ENCODE measurements at regions of chr1 and their contacts with region 1.

Region 1: DNA sequence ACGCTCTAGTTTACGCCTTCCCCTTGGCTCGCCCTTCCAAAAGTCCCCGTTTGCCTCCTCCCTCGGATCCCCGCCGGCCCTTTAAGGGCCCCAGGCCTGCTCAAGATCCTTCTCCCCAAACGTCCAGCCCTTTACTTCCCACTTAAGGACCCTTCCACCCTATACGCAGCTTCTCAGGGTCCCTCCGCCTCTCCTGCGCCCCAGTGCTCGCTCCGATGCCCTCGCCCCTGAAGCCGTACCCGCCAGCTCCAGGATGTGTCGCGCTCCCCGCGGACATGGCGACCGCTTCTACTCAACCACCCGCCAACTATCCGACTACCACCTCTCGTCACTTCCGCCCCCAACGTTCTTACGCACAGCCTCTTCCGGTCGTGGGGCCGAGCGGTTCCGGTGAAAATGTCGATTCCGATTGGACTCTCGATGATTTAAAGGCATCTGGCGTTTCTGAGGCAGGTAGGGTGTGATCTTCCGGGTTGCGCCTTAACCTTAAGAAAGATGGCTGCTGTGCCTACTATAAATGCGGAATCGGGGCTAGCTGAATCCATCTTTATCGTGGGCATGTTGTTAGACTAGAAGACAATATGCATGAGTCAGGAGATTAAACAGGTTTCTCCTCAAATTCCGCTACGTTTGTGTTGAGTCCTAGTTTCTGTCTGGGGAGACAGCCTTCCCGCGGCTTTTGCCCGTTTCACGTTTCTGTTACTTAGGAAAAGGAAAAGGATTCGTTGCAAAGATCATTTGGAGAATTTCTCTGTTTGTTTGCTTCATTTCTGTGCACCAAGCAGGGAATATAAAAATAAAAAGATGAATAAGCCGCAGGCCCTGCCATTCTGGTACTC is at the start of gene KHDC4:
- DNase-seq: peak; percentile 95
- CTCF ChIP-seq: no peak

Region 2: GRCh38 chr1:155527677-155528076 is 406.6 kb before region 1 on chr1:
- CTCF ChIA-PET with region 1: no interaction called
- POLR2A ChIA-PET with region 1: interaction called, 14 read pairs
- DNase-seq: no peak
- CTCF ChIP-seq: no peak

Region 3: GRCh38 chr1:155688324-155689080 is 245.8 kb before region 1 on chr1 and contains the start of gene YY1AP1:
- CTCF ChIA-PET with region 1: no interaction called
- POLR2A ChIA-PET with region 1: no interaction called
- DNase-seq: peak; percentile 95
- CTCF ChIP-seq: no peak

Region 4: GRCh38 chr1:155847823-155848529 is 86.3 kb before region 1 on chr1:
- CTCF ChIA-PET with region 1: no interaction called
- POLR2A ChIA-PET with region 1: no interaction called
- DNase-seq: no peak
- CTCF ChIP-seq: no peak

Region 5: GRCh38 chr1:155946633-155947219 is 12.4 kb after region 1 on chr1:
- CTCF ChIA-PET with region 1: interaction called, 8 read pairs
- POLR2A ChIA-PET with region 1: interaction called, 11 read pairs
- DNase-seq: no peak
- CTCF ChIP-seq: no peak

Region 6: GRCh38 chr1:155978325-155978972 is 44.1 kb after region 1 on chr1 and contains the start of gene ARHGEF2:
- CTCF ChIA-PET with region 1: interaction called, 51 read pairs
- POLR2A ChIA-PET with region 1: interaction called, 3 read pairs
- DNase-seq: peak; percentile 90
- CTCF ChIP-seq: peak; percentile 33

Region 7: DNA sequence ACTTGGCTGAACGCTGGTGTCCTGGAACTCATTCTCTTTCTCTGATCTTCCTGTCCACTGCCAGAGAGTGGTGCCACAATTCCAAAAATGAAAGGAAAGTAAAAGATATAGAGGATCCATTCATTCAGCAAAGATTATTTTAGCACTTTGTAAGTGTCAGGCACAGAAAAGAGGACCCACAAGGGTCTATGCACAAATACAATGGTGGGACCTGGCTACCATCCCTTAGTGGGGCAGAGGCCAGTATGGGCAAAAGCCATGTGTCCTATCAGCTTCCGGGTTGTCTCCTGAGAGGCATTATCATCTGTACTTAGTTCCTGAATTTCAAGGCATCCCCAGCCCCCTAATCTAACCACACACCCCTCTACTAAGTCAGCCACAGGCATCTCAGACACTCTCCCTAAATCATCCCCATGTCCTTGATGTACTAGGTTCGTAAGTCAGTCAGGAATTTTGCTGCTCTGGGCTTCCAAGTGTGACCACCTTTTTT is 67.4 kb after region 1 on chr1:
- CTCF ChIA-PET with region 1: interaction called, 11 read pairs
- POLR2A ChIA-PET with region 1: no interaction called
- DNase-seq: no peak
- CTCF ChIP-seq: no peak

Measured in GM10248 (cell line).